ENCODE measurements at regions of chr3 and their contacts with region 1.

Region 1: GRCh38 chr3:134754768-134755559 is 40.1 kb upstream of the EPHB1 start:
- DNase-seq: no peak
- ATAC-seq: peak; percentile 58

Region 2: GRCh38 chr3:133426721-133427120 is 1328.2 kb before region 1 on chr3:
- intact Hi-C with region 1: no loop called
- DNase-seq: no peak
- ATAC-seq: no peak

Region 3: GRCh38 chr3:134640872-134641470 is 114.0 kb before region 1 on chr3:
- intact Hi-C with region 1: no loop called
- DNase-seq: no peak
- ATAC-seq: no peak

Region 4: GRCh38 chr3:134663721-134664456 is 91.1 kb before region 1 on chr3:
- intact Hi-C with region 1: loop called (anchors 5 kb)
- DNase-seq: no peak
- ATAC-seq: peak; percentile 18